ENCODE measurements at regions of chr20 and their contacts with region 1.

Region 1: DNA sequence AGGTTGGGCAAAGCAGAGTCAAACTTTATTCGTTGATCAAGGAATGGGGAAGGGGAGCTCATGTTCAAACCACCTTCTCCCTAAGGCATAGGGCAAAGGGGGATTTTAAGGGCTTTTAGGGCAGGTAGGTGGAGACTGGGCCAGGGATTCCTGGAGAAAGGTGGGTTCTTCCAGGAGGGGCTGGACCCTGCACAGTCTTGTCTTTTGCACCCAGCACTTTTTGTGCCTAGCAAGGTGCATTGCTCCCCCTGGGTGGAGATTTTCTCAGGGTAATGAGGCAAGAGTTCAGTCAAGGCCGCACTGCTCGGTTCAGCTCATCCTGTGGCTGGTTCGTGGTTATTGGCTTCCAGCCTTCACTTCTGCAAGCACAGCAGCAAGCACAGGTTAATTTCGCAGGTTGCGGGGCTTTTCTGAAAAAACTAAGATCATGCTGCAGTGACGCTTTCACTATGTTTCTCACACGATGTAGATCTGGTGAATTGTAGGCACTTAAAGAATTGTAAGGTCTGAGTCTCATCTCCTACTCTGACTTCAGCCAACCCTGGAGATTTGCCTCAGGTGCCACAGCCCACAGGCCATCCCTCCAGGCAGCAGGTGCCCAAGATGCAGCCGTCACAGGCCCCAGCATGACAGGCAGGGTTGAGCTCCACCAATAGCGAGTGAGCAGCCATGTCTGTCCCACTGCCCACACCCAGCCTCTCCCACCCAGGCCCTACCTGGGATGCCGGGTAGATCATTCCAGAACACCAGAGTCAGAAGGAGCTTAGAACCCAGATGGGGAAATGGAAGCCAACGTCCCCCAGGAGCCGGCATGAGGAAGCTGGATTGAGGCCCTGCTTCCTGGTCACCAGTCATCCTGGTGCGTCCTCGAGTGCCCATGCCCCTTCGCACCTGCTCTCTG is 37.1 kb downstream of the SUN5 start:
- DNase-seq: peak; percentile 85
- H3K4me3 Mint-ChIP-seq: peak overlapping the region; percentile 59
- H3K27ac Mint-ChIP-seq: peak overlapping the region; percentile 96
- H3K4me1 Mint-ChIP-seq: peaks cover 72% of the 10 kb centered on the region
- H3K27me3 Mint-ChIP-seq: no peaks in the 10 kb centered on the region

Region 2: GRCh38 chr20:32945710-32946221 is 21.4 kb before region 1 on chr20:
- CTCF ChIA-PET with region 1: interaction called, 13 read pairs
- POLR2A ChIA-PET with region 1: no interaction called
- DNase-seq: peak; percentile 48
- H3K4me3 Mint-ChIP-seq: no peak overlapping the region
- H3K27ac Mint-ChIP-seq: peak overlapping the region; percentile 87
- H3K4me1 Mint-ChIP-seq: peaks cover 36% of the 10 kb centered on the region
- H3K27me3 Mint-ChIP-seq: no peaks in the 10 kb centered on the region